CD4-positive, alpha-beta memory T cell (primary cell): ENCODE measurements at regions of chr6 and their contacts with region 1.

Region 1: GRCh38 chr6:44237813-44238433 is 9.0 kb upstream of the HSP90AB1 start:
- DNase-seq: peak; percentile 66 to 85 (median 80)
- H3K4me3 ChIP-seq: peak overlapping the region; percentile 8 to 95
- H3K4me3 Mint-ChIP-seq: peak overlapping the region; percentile 85 to 93 (median 90)
- H3K27ac ChIP-seq: peak overlapping the region; percentile 93
- H3K27ac Mint-ChIP-seq: peak overlapping the region; percentile 89 to 98 (median 95)
- H3K4me1 ChIP-seq: peaks cover 12% of the 10 kb centered on the region
- H3K4me1 Mint-ChIP-seq: peaks cover 2 to 15% (median 9%) of the 10 kb centered on the region in 4 donors
- H3K27me3 ChIP-seq: no peaks in the 10 kb centered on the region
- H3K27me3 Mint-ChIP-seq: no peaks in the 10 kb centered on the region

Region 2: GRCh38 chr6:43943781-43944250 is 294.1 kb before region 1 on chr6:
- CTCF ChIA-PET with region 1: no interaction called
- POLR2A ChIA-PET with region 1: no interaction called
- intact Hi-C with region 1: no loop called
- DNase-seq: no peak
- H3K4me3 ChIP-seq: no peak overlapping the region
- H3K4me3 Mint-ChIP-seq: no peak overlapping the region
- H3K27ac ChIP-seq: no peak overlapping the region
- H3K27ac Mint-ChIP-seq: no peak overlapping the region
- H3K4me1 ChIP-seq: no peaks in the 10 kb centered on the region
- H3K4me1 Mint-ChIP-seq: no peaks in the 10 kb centered on the region
- H3K27me3 ChIP-seq: no peaks in the 10 kb centered on the region
- H3K27me3 Mint-ChIP-seq: peaks cover 0 to 1% of the 10 kb centered on the region in 2 donors

Region 3: GRCh38 chr6:44096612-44097011 is 141.3 kb before region 1 on chr6:
- CTCF ChIA-PET with region 1: interaction called, 6 read pairs
- POLR2A ChIA-PET with region 1: interaction called, 3 read pairs
- intact Hi-C with region 1: loop called (anchors 1 kb)
- DNase-seq: peak; percentile 67 to 76 (median 70)
- H3K4me3 ChIP-seq: no peak overlapping the region
- H3K4me3 Mint-ChIP-seq: no peak overlapping the region
- H3K27ac ChIP-seq: no peak overlapping the region
- H3K27ac Mint-ChIP-seq: peak overlapping the region in 3 of 7 donors; percentile 5 to 77 (median 70)
- H3K4me1 ChIP-seq: no peaks in the 10 kb centered on the region
- H3K4me1 Mint-ChIP-seq: peaks cover under 1 to 7% (median 5%) of the 10 kb centered on the region in 4 donors
- H3K27me3 ChIP-seq: no peaks in the 10 kb centered on the region
- H3K27me3 Mint-ChIP-seq: no peaks in the 10 kb centered on the region

Region 4: GRCh38 chr6:44172731-44173500 is 65.0 kb before region 1 on chr6:
- CTCF ChIA-PET with region 1: interaction called, 10 read pairs
- POLR2A ChIA-PET with region 1: interaction called, 5 read pairs
- intact Hi-C with region 1: loop called (anchors 1 kb)
- DNase-seq: peak; percentile 53 to 68 (median 62)
- H3K4me3 ChIP-seq: no peak overlapping the region
- H3K4me3 Mint-ChIP-seq: no peak overlapping the region
- H3K27ac ChIP-seq: no peak overlapping the region
- H3K27ac Mint-ChIP-seq: peak overlapping the region in 2 of 7 donors; percentile 0 to 48
- H3K4me1 ChIP-seq: peaks cover 9% of the 10 kb centered on the region
- H3K4me1 Mint-ChIP-seq: peaks cover 0 to 5% (median 2%) of the 10 kb centered on the region in 4 donors
- H3K27me3 ChIP-seq: no peaks in the 10 kb centered on the region
- H3K27me3 Mint-ChIP-seq: peaks cover 8 to 16% of the 10 kb centered on the region in 2 donors

Region 5: GRCh38 chr6:44221291-44221960 is 16.5 kb before region 1 on chr6:
- CTCF ChIA-PET with region 1: interaction called, 84 read pairs
- POLR2A ChIA-PET with region 1: interaction called, 16 read pairs
- intact Hi-C with region 1: loop called (anchors 1 kb)
- DNase-seq: peak; percentile 72 to 80 (median 74)
- H3K4me3 ChIP-seq: no peak overlapping the region
- H3K4me3 Mint-ChIP-seq: peak overlapping the region in 4 of 8 donors; percentile 15 to 68 (median 29)
- H3K27ac ChIP-seq: no peak overlapping the region
- H3K27ac Mint-ChIP-seq: peak overlapping the region in 4 of 7 donors; percentile 44 to 72 (median 56)
- H3K4me1 ChIP-seq: peaks cover 29% of the 10 kb centered on the region
- H3K4me1 Mint-ChIP-seq: peaks cover 7 to 36% (median 21%) of the 10 kb centered on the region in 4 donors
- H3K27me3 ChIP-seq: no peaks in the 10 kb centered on the region
- H3K27me3 Mint-ChIP-seq: peaks cover 2 to 7% of the 10 kb centered on the region in 2 donors

Region 6: GRCh38 chr6:44251576-44252524 is 13.9 kb after region 1 on chr6:
- CTCF ChIA-PET with region 1: interaction called, 18 read pairs
- POLR2A ChIA-PET with region 1: interaction called, 71 read pairs
- intact Hi-C with region 1: loop called (anchors 1 kb)
- DNase-seq: no peak
- H3K4me3 ChIP-seq: no peak overlapping the region
- H3K4me3 Mint-ChIP-seq: peak overlapping the region in 2 of 8 donors; percentile 13 to 55
- H3K27ac ChIP-seq: no peak overlapping the region
- H3K27ac Mint-ChIP-seq: peak overlapping the region in 4 of 7 donors; percentile 82 to 99 (median 84)
- H3K4me1 ChIP-seq: peaks cover 45% of the 10 kb centered on the region
- H3K4me1 Mint-ChIP-seq: peaks cover 45 to 93% (median 60%) of the 10 kb centered on the region in 4 donors
- H3K27me3 ChIP-seq: no peaks in the 10 kb centered on the region
- H3K27me3 Mint-ChIP-seq: peaks cover under 1 to 3% of the 10 kb centered on the region in 2 donors

Region 7: DNA sequence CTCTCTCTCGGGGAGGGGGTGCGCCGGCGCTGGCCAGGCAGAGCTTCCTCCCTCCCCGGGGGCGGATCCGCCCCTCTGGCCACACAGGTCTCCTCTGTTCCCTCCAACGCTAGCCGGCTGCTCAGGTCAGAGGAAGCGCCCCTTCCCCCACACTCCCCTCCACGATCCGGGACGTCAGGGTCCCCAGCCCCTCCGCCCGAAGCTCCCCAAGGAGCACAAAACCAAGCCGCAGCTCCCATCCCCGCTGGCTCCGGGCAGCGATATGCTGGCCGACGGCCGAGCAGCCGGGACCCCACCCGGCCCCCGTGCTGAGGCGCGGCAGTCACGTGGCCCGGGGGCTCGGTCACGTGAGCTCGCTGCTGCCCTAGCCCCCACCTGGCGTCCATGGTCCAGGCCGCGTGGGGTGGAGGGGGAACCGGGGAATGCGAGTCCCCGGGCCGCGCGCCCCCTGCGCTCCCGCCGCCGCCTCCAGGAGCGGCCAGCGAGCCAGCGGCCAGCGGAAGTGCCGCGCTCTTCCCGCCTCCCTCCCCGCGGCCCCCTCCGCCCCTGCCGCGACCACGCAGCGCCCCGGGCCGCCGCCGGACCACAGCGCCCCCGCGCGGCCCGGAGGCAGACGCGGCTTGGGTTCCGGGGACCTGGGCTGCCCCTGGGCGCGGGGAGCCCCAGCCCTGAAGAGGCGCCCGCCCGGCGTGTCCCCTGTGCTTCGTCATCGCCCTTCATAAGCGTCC is 19.3 kb after region 1 on chr6 and contains the start of gene SLC35B2:
- CTCF ChIA-PET with region 1: interaction called, 10 read pairs
- POLR2A ChIA-PET with region 1: interaction called, 23 read pairs
- intact Hi-C with region 1: no loop called
- DNase-seq: peak; percentile 57 to 81 (median 70)
- H3K4me3 ChIP-seq: peak within 1 kb of the TSS; percentile 63 to 73
- H3K4me3 Mint-ChIP-seq: peak within 1 kb of the TSS; percentile 86 to 94 (median 89)
- H3K27ac ChIP-seq: peak within 1 kb of the TSS; percentile 82
- H3K27ac Mint-ChIP-seq: peak within 1 kb of the TSS; percentile 80 to 97 (median 96)
- H3K4me1 ChIP-seq: peaks cover 40% of the 10 kb centered on the region
- H3K4me1 Mint-ChIP-seq: peaks cover 33 to 62% (median 49%) of the 10 kb centered on the region in 4 donors
- H3K27me3 ChIP-seq: no peaks in the 10 kb centered on the region
- H3K27me3 Mint-ChIP-seq: no peaks in the 10 kb centered on the region
- total RNA-seq, gene SLC35B2: 20.7 to 20.9 TPM